Sciatic nerve (tissue), 2 donors: ENCODE measurements at regions of chr11 and their contacts with region 1.

Region 1: GRCh38 chr11:73335204-73335923 is 27.3 kb downstream of the ARHGEF17 start:
- DNase-seq: peak; percentile 94
- ATAC-seq: peak; percentile 70

Region 2: DNA sequence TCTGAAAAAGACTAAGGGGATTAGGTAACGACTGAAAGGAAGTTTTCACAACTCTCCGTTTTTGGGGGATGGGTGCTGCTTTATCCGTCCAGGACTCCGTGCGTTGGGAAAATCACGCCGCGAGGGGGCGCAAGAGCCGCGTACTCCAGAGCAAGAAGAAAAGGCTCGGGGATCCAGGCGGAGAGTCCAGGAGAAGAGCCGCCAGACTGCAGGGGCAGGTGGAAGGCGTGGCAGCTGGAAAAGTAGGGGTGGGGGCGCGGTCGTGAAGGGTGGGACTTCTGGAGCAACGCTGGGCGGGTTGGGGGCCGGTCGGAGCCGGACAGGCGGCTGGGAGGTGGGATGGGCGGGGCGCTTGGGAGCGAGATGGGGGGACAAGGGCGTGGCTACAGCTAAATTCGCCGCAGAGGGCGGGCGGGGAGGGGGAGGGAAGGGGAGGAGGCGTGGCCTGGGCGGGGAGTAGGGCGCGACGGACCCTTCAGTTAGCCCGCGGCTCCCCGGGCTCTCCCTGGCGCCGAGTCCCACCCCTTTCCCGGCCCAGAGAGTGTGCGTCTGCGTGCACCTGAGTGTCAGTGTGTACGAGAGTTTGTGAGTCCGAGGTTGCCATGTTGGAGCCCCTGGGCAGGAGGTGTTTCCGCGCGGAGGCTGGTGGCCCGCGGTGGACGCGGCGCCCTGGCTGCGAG is 27.9 kb before region 1 on chr11:
- intact Hi-C with region 1: loop called (anchors 2 kb)
- DNase-seq: peak; percentile 100
- ATAC-seq: peak; percentile 82